GM12878 (cell line): ENCODE measurements at regions of chr4 and their contacts with region 1.

Region 1: GRCh38 chr4:26935397-26935796 is 74.8 kb downstream of the STIM2 start:
- DNase-seq: no peak
- ATAC-seq: no peak
- H3K4me3 ChIP-seq: no peak overlapping the region
- H3K27ac ChIP-seq: no peak overlapping the region
- H3K4me1 ChIP-seq: peaks cover 4% of the 10 kb centered on the region; the same call in 1 of the 2 replicates
- H3K27me3 ChIP-seq: no peaks in the 10 kb centered on the region
- CTCF ChIP-seq: no peak
- EP300 ChIP-seq: no peak
- POLR2A ChIP-seq: no peak
- RAD21 ChIP-seq: no peak

Region 2: DNA sequence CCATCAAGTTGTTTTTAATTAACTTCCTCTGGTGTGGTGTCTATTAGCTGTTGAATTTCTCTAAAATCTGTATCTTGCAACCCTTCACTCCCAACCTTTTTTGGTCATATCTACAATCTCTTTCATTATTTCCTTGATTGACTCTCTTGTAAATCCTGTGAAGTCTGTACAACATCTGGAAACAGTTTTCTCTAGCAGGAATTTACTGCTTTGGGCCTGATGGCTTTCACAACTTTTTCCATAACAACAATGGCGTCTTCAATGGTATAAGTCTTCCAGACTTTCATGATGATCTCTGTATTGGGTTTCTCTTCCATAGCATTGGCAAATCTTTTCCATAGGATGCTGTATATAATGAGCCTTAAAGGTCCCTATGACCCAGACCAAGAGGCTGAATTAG is 302.5 kb before region 1 on chr4:
- CTCF ChIA-PET with region 1: no interaction called
- POLR2A ChIA-PET with region 1: interaction called, 10 read pairs
- RAD21 ChIA-PET with region 1: no interaction called
- SMC1A ChIA-PET with region 1: no interaction called
- in situ Hi-C with region 1: no loop called
- intact Hi-C with region 1: no loop called
- DNase-seq: no peak
- ATAC-seq: no peak
- H3K4me3 ChIP-seq: no peak overlapping the region
- H3K27ac ChIP-seq: no peak overlapping the region
- H3K4me1 ChIP-seq: no peaks in the 10 kb centered on the region
- H3K27me3 ChIP-seq: no peaks in the 10 kb centered on the region
- CTCF ChIP-seq: no peak
- EP300 ChIP-seq: no peak
- POLR2A ChIP-seq: no peak
- RAD21 ChIP-seq: no peak

Region 3: GRCh38 chr4:27168559-27169182 is 233.3 kb after region 1 on chr4:
- CTCF ChIA-PET with region 1: no interaction called
- POLR2A ChIA-PET with region 1: no interaction called
- RAD21 ChIA-PET with region 1: no interaction called
- SMC1A ChIA-PET with region 1: no interaction called
- in situ Hi-C with region 1: no loop called
- intact Hi-C with region 1: no loop called
- DNase-seq: no peak
- ATAC-seq: no peak
- H3K4me3 ChIP-seq: no peak overlapping the region
- H3K27ac ChIP-seq: no peak overlapping the region
- H3K4me1 ChIP-seq: no peaks in the 10 kb centered on the region
- H3K27me3 ChIP-seq: no peaks in the 10 kb centered on the region
- CTCF ChIP-seq: no peak
- EP300 ChIP-seq: no peak
- POLR2A ChIP-seq: no peak
- RAD21 ChIP-seq: no peak

Region 4: DNA sequence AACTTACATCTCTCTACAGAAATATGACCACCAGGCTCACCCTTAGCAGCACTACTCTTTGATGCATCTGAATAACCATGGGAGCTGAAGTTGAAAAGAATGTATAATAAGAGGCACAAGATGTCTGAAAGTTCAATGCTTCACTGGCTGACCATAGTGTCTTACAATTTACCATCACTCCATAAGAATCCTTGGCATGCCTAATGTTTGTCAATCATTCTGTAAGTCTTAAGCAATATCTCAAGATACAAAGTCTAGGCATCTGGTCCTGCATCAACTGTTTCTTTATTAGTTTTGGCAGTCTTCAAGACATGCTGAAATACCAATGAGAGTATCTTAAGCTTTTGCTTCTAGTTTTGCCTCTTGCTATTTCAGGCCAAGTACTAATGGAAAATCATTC is 680.8 kb after region 1 on chr4:
- CTCF ChIA-PET with region 1: no interaction called
- POLR2A ChIA-PET with region 1: no interaction called
- RAD21 ChIA-PET with region 1: no interaction called
- SMC1A ChIA-PET with region 1: no interaction called
- in situ Hi-C with region 1: no loop called
- intact Hi-C with region 1: no loop called
- DNase-seq: no peak
- ATAC-seq: no peak
- H3K4me3 ChIP-seq: no peak overlapping the region
- H3K27ac ChIP-seq: no peak overlapping the region
- H3K4me1 ChIP-seq: no peaks in the 10 kb centered on the region
- H3K27me3 ChIP-seq: no peaks in the 10 kb centered on the region; a peak in 1 of 4 replicates
- CTCF ChIP-seq: no peak
- EP300 ChIP-seq: no peak
- POLR2A ChIP-seq: no peak
- RAD21 ChIP-seq: no peak